ENCODE measurements at regions of chr4 and their contacts with region 1.

Region 1: DNA sequence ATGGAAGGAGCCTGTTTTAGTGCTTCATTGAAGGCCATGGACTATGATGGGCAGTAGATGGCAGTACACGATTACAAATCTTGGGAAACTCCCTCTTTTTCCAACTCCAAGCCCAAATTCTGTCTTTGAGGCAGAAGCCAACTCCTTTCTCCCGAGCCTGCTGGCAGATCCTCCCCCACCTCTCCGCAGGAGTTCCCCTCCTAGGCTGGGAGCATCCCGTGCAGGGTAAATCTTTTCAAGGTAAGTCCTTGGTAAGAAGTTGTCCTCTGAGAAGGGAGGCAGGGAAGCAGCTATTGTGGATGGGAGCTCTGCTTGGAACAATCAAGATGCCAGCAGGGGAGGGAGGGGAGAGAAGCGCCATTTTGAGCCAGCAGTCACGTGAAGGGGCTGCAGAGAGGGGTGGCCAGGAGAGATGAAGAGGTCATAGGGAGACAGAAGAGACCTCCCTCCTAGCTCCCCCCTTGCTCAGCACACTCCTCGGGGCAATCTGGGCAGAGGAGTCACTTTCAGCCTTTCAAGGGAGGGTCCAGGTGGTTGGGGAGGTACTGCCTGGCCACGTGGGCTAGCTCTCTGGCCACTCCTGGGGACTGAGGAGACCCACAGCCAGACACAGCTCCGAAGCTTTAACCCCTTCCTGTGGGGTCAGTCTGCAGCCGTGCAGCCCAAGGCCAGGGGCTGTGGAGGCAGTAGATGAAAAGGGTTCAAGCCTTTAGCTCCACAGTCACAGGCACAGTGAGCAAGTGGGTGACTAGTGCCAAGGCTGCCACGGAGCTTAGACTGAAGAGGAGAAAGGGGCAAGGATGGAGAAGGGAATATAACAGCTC is 9.6 kb downstream of the CC2D2A start:
- DNase-seq: peak; percentile 81 to 82
- H3K4me3 ChIP-seq: peak overlapping the region; percentile 37
- H3K4me3 Mint-ChIP-seq: peak overlapping the region; percentile 97
- H3K27ac Mint-ChIP-seq: peak overlapping the region; percentile 96
- H3K4me1 ChIP-seq: no peaks in the 10 kb centered on the region
- H3K4me1 Mint-ChIP-seq: peaks cover 7% of the 10 kb centered on the region
- H3K27me3 ChIP-seq: no peaks in the 10 kb centered on the region
- H3K27me3 Mint-ChIP-seq: no peaks in the 10 kb centered on the region
- CTCF ChIP-seq: peak; percentile 50 to 60

Region 2: GRCh38 chr4:14800977-14801376 is 678.3 kb before region 1 on chr4:
- CTCF ChIA-PET with region 1: no interaction called
- POLR2A ChIA-PET with region 1: no interaction called
- intact Hi-C with region 1: no loop called
- DNase-seq: no peak
- H3K4me3 ChIP-seq: no peak overlapping the region
- H3K4me3 Mint-ChIP-seq: no peak overlapping the region
- H3K27ac Mint-ChIP-seq: no peak overlapping the region
- H3K4me1 ChIP-seq: no peaks in the 10 kb centered on the region
- H3K4me1 Mint-ChIP-seq: no peaks in the 10 kb centered on the region
- H3K27me3 ChIP-seq: no peaks in the 10 kb centered on the region
- H3K27me3 Mint-ChIP-seq: no peaks in the 10 kb centered on the region
- CTCF ChIP-seq: no peak

Region 3: GRCh38 chr4:15495621-15496020 is 16.3 kb after region 1 on chr4:
- CTCF ChIA-PET with region 1: no interaction called
- POLR2A ChIA-PET with region 1: no interaction called
- intact Hi-C with region 1: no loop called
- DNase-seq: no peak
- H3K4me3 ChIP-seq: no peak overlapping the region
- H3K4me3 Mint-ChIP-seq: no peak overlapping the region
- H3K27ac Mint-ChIP-seq: no peak overlapping the region
- H3K4me1 ChIP-seq: no peaks in the 10 kb centered on the region
- H3K4me1 Mint-ChIP-seq: no peaks in the 10 kb centered on the region
- H3K27me3 ChIP-seq: no peaks in the 10 kb centered on the region
- H3K27me3 Mint-ChIP-seq: no peaks in the 10 kb centered on the region
- CTCF ChIP-seq: no peak

Region 4: GRCh38 chr4:15575961-15576360 is 96.7 kb after region 1 on chr4:
- CTCF ChIA-PET with region 1: interaction called, 16 read pairs
- POLR2A ChIA-PET with region 1: no interaction called
- intact Hi-C with region 1: loop called (anchors 1 kb)
- DNase-seq: peak in 1 of 2 experiments; percentile 10
- H3K4me3 ChIP-seq: no peak overlapping the region
- H3K4me3 Mint-ChIP-seq: no peak overlapping the region
- H3K27ac Mint-ChIP-seq: no peak overlapping the region
- H3K4me1 ChIP-seq: peaks cover 10% of the 10 kb centered on the region
- H3K4me1 Mint-ChIP-seq: no peaks in the 10 kb centered on the region
- H3K27me3 ChIP-seq: no peaks in the 10 kb centered on the region
- H3K27me3 Mint-ChIP-seq: no peaks in the 10 kb centered on the region
- CTCF ChIP-seq: no peak

Region 5: GRCh38 chr4:15655229-15656037 is 176.1 kb after region 1 on chr4 and contains the start of gene FBXL5:
- CTCF ChIA-PET with region 1: interaction called, 13 read pairs
- POLR2A ChIA-PET with region 1: interaction called, 7 read pairs
- intact Hi-C with region 1: loop called (anchors 1 kb)
- DNase-seq: peak; percentile 65 to 88
- H3K4me3 ChIP-seq: peak within 1 kb of the TSS; percentile 65
- H3K4me3 Mint-ChIP-seq: peak within 1 kb of the TSS; percentile 95
- H3K27ac Mint-ChIP-seq: peak within 1 kb of the TSS; percentile 99
- H3K4me1 ChIP-seq: peaks cover 6% of the 10 kb centered on the region
- H3K4me1 Mint-ChIP-seq: peaks cover 6% of the 10 kb centered on the region
- H3K27me3 ChIP-seq: no peaks in the 10 kb centered on the region
- H3K27me3 Mint-ChIP-seq: no peaks in the 10 kb centered on the region
- CTCF ChIP-seq: no peak
- total RNA-seq, gene FBXL5: 29.1 and 32.7 TPM in 2 replicates

Region 6: GRCh38 chr4:15729910-15730533 is 250.7 kb after region 1 on chr4:
- CTCF ChIA-PET with region 1: no interaction called
- POLR2A ChIA-PET with region 1: no interaction called
- intact Hi-C with region 1: loop called (anchors 2 kb)
- DNase-seq: peak in 1 of 2 experiments; percentile 38
- H3K4me3 ChIP-seq: no peak overlapping the region
- H3K4me3 Mint-ChIP-seq: no peak overlapping the region
- H3K27ac Mint-ChIP-seq: no peak overlapping the region
- H3K4me1 ChIP-seq: no peaks in the 10 kb centered on the region
- H3K4me1 Mint-ChIP-seq: no peaks in the 10 kb centered on the region
- H3K27me3 ChIP-seq: no peaks in the 10 kb centered on the region
- H3K27me3 Mint-ChIP-seq: peaks cover 3% of the 10 kb centered on the region
- CTCF ChIP-seq: peak; percentile 66 to 67

Region 7: GRCh38 chr4:15882675-15883086 is 403.4 kb after region 1 on chr4:
- CTCF ChIA-PET with region 1: interaction called, 9 read pairs
- POLR2A ChIA-PET with region 1: no interaction called
- intact Hi-C with region 1: loop called (anchors 1 kb)
- DNase-seq: peak; percentile 53 to 71
- H3K4me3 ChIP-seq: no peak overlapping the region
- H3K4me3 Mint-ChIP-seq: no peak overlapping the region
- H3K27ac Mint-ChIP-seq: no peak overlapping the region
- H3K4me1 ChIP-seq: no peaks in the 10 kb centered on the region
- H3K4me1 Mint-ChIP-seq: no peaks in the 10 kb centered on the region
- H3K27me3 ChIP-seq: no peaks in the 10 kb centered on the region
- H3K27me3 Mint-ChIP-seq: peaks cover 2% of the 10 kb centered on the region
- CTCF ChIP-seq: peak; percentile 85 to 88

Region 8: GRCh38 chr4:16001484-16001858 is 522.2 kb after region 1 on chr4:
- CTCF ChIA-PET with region 1: no interaction called
- POLR2A ChIA-PET with region 1: no interaction called
- intact Hi-C with region 1: loop called (anchors 1 kb)
- DNase-seq: peak; percentile 56 to 64
- H3K4me3 ChIP-seq: no peak overlapping the region
- H3K4me3 Mint-ChIP-seq: no peak overlapping the region
- H3K27ac Mint-ChIP-seq: no peak overlapping the region
- H3K4me1 ChIP-seq: no peaks in the 10 kb centered on the region
- H3K4me1 Mint-ChIP-seq: no peaks in the 10 kb centered on the region
- H3K27me3 ChIP-seq: no peaks in the 10 kb centered on the region
- H3K27me3 Mint-ChIP-seq: no peaks in the 10 kb centered on the region
- CTCF ChIP-seq: peak; percentile 58 to 74

Measured in Caco-2 (cell line).